Transverse colon (tissue), 4 donors: ENCODE measurements at regions of chr9 and their contacts with region 1.

Region 1: GRCh38 chr9:70484210-70485130 is 70.0 kb upstream of the KLF9 start:
- DNase-seq: peak; percentile 42
- H3K4me3 ChIP-seq: no peak overlapping the region
- H3K27ac ChIP-seq: peak overlapping the region; percentile 58 to 94 (median 92)
- H3K4me1 ChIP-seq: peaks cover 21 to 70% (median 55%) of the 10 kb centered on the region in 4 donors
- H3K27me3 ChIP-seq: no peaks in the 10 kb centered on the region
- CTCF ChIP-seq: peak; percentile 75 to 93 (median 84)
- EP300 ChIP-seq: no peak
- POLR2A ChIP-seq: no peak

Region 2: DNA sequence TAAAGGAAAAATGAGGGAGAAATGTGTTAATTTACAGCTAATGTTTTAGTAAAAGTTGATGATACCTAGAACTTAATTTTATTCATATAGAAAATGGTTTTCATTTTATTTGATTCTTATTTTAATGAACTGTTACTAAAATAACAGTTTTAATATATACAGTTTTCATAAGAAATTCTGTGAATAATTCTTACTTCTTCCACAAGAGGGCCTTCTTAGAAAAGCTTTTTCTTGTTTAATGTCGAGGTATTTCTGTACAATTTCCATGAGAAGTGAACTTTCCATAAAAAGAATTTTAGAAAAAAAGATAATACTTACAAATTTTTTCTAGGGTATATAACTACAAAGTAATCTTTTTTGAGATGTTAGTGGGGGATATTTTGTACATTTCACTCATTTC is 143.9 kb before region 1 on chr9:
- in situ Hi-C with region 1: loop called in 2 of 4 experiments (anchors 10 kb)
- intact Hi-C with region 1: no loop called
- DNase-seq: no peak
- H3K4me3 ChIP-seq: no peak overlapping the region
- H3K27ac ChIP-seq: no peak overlapping the region
- H3K4me1 ChIP-seq: peaks cover 0 to 3% (median 0%) of the 10 kb centered on the region in 4 donors
- H3K27me3 ChIP-seq: no peaks in the 10 kb centered on the region
- CTCF ChIP-seq: peak; percentile 53 to 77 (median 60)
- EP300 ChIP-seq: no peak
- POLR2A ChIP-seq: no peak

Region 3: DNA sequence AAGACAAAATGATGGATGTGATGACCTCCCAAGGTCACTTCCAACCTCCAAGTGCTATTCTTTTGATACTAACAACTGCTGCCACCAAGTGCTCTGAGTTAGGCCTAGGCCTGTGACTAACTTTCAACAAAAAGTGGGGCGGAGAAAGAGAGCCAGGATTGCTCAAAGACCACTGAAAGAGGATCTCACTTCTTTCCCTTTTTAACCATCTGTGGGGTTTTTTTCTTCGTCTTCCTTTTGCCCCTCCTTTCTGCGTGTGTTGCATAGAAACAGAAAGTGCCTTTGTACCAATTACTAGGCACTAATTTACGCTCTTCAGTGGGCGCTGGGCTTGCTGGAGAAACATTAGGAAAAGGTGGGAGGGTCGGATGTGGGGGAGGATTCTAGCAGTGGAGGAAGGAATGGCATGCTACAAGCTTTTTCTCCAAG is 78.0 kb before region 1 on chr9:
- in situ Hi-C with region 1: loop called in 2 of 4 experiments (anchors 10 kb)
- intact Hi-C with region 1: no loop called
- DNase-seq: peak; percentile 33
- H3K4me3 ChIP-seq: peak overlapping the region in 1 of 4 donors; percentile 24
- H3K27ac ChIP-seq: peak overlapping the region; percentile 81 to 86 (median 82)
- H3K4me1 ChIP-seq: peaks cover 44 to 92% (median 85%) of the 10 kb centered on the region in 4 donors
- H3K27me3 ChIP-seq: no peaks in the 10 kb centered on the region
- CTCF ChIP-seq: no peak
- EP300 ChIP-seq: no peak
- POLR2A ChIP-seq: no peak

Region 4: DNA sequence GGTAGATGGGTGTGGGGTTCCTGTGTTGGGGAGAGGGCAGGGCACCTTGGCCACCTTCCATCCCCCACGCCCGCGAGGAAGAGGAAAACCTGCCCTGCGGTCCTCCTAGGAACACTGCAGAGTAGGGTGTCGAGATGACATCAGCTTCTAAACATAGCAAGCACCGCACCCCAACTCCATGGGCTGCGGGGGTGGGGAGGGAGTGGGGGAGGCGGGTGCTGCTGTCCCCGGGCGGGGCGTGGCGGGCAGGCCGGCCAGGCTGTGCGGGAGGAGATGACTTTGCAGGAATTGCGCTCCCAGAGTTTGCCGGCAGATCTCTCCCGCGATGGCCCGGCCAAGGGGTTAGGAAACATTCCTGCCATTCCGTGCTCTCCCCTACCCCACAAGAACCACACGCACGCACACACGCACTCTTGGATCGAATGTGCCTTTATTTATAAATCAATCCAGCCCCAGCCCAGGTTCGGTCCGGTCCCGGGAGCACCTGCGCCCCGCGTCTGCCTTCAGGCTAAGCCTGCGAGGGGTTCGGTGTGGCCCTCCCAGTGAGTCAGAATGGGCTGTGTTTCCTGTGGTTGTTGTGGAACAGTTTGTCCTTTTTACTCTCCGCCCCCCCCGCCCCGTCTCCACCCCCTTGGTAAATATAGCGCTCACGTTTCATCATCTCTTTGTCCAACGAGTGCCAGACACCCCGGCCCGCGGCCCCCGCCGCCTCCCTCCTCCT is 64.8 kb before region 1 on chr9:
- in situ Hi-C with region 1: loop called in 3 of 4 experiments (anchors 5 to 10 kb)
- intact Hi-C with region 1: loop called (anchors 1 kb)
- DNase-seq: peak; percentile 96
- H3K4me3 ChIP-seq: peak overlapping the region; percentile 17 to 45 (median 32)
- H3K27ac ChIP-seq: peak overlapping the region; percentile 99 to 100 (median 100)
- H3K4me1 ChIP-seq: peaks cover 32 to 58% (median 45%) of the 10 kb centered on the region in 4 donors
- H3K27me3 ChIP-seq: no peaks in the 10 kb centered on the region
- CTCF ChIP-seq: peak in 2 of 5 experiments; percentile 42 to 44
- EP300 ChIP-seq: peak; percentile 98
- POLR2A ChIP-seq: peak; percentile 98

Region 5: DNA sequence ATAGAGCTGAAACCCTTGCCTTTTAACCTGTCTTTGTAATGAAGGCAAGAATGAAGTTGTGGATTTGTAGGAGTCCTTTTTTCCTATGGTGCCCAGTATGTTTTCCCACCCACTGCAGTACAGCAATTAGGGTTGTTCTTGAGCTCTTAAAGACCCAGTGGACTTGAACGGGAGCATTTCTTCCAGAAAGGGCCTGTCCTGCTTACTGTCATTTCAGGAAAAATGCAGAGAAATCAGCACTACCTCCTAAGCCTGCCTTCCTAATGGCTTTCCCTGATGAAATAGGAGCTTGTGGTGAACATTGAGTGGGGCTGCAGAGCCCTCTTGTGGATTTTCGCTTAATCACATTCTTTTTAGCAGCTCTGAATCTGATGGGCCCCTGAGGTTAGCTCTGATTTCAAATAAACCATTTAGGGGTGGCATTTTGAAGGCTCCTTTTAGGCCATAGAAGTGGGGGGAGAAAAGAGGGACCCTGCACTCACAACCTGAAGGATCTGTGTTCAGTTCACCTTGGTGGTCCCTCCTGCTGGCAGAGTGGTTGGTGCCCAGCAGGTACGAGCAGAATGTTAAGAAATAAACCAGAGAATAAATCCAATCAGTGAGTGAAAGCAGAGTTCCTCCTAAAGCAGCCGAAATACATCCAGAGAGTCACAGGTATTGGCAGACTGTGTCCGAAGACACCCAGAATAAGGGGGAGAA is 118.0 kb after region 1 on chr9:
- in situ Hi-C with region 1: loop called in 2 of 4 experiments (anchors 10 kb)
- intact Hi-C with region 1: loop called (anchors 5 kb)
- DNase-seq: peak; percentile 61
- H3K4me3 ChIP-seq: peak overlapping the region in 2 of 4 donors; percentile 1 to 5
- H3K27ac ChIP-seq: peak overlapping the region; percentile 82 to 86 (median 84)
- H3K4me1 ChIP-seq: peaks cover 14 to 29% (median 21%) of the 10 kb centered on the region in 4 donors
- H3K27me3 ChIP-seq: no peaks in the 10 kb centered on the region
- CTCF ChIP-seq: peak; percentile 70 to 87 (median 75)
- EP300 ChIP-seq: no peak
- POLR2A ChIP-seq: no peak

Region 6: DNA sequence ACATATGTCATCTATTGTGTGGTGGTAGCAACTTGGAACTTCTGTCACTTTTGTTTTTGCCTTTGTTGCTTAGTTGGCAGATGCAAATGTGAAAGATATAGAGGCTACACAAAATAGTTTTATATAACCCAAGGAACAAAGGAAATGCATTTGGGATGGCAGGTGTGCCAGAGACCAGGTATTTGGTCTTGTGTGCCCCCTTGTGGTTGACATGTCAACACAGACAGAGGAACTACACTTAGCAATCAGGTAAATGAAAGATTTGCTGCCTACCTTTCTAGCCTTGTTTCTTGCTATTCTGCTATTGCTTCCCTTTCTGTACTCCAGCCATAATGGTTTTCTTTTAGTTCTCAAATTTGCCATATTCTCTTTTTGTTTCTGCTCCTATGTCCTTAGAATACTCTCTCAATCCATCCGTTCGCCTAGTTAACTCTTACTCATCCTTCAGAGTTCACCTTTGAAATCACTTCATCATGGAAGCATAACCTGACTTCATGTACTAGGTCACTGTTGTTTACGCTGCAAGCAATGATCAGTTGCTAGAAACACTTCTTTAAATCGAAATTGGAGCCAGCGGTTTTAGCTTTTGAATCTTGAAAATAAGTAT is 517.4 kb after region 1 on chr9:
- in situ Hi-C with region 1: no loop called
- intact Hi-C with region 1: no loop called
- DNase-seq: peak; percentile 28
- H3K4me3 ChIP-seq: no peak overlapping the region
- H3K27ac ChIP-seq: no peak overlapping the region
- H3K4me1 ChIP-seq: no peaks in the 10 kb centered on the region
- H3K27me3 ChIP-seq: no peaks in the 10 kb centered on the region
- CTCF ChIP-seq: peak; percentile 40 to 48 (median 45)
- EP300 ChIP-seq: no peak
- POLR2A ChIP-seq: no peak